Esophagus muscularis mucosa (tissue), 4 donors: ENCODE measurements at regions of chr16 and their contacts with region 1.

Region 1: GRCh38 chr16:87778830-87779579 is 13.2 kb upstream of the KLHDC4 start:
- DNase-seq: peak; percentile 98
- H3K4me3 ChIP-seq: peak overlapping the region in 1 of 4 donors; percentile 2
- H3K27ac ChIP-seq: no peak overlapping the region
- H3K4me1 ChIP-seq: peaks cover 14 to 28% (median 22%) of the 10 kb centered on the region in 4 donors
- H3K27me3 ChIP-seq: peaks cover 0 to 14% (median 0%) of the 10 kb centered on the region in 4 donors
- CTCF ChIP-seq: peak; percentile 98 to 99 (median 98)
- EP300 ChIP-seq: no peak
- POLR2A ChIP-seq: no peak

Region 2: DNA sequence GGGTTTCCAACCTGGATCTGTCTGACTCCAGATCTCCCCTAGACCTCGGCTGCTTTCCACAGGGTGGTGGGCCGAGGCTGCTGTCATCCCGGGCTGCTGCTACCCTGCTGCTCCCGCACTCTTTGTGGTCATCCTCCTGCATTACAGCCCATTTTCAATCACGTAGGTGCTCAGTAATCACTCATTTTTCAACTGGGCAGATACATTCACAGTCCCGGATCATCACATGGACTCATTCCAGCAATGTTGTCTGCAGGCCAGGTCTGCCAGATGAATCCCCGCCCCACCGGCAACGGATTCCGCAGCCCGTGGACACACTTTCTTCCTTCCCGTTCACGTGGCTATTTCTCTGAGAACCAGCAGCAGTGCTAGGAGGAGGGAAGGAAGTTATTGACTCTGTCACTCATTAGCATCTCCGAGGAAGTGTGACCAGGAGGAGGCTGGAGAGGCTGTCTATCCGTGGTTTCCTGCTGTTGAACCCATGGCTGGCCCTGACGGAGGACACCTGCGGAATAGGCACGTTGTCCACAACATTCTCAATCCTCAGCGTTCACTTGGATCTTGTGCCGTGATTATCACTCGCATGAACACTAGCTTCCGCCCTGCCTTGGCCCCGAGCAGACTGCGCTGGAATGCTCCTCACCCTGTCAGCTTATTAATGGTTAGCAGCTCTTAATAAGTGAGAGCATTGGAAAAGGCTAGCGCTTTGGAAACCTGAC is 271.5 kb before region 1 on chr16:
- intact Hi-C with region 1: no loop called
- DNase-seq: no peak
- H3K4me3 ChIP-seq: peak overlapping the region; percentile 13 to 38 (median 25)
- H3K27ac ChIP-seq: peak overlapping the region in 3 of 4 donors; percentile 5 to 57 (median 35)
- H3K4me1 ChIP-seq: peaks cover 0 to 20% (median 16%) of the 10 kb centered on the region in 4 donors
- H3K27me3 ChIP-seq: peaks cover 0 to 15% (median 0%) of the 10 kb centered on the region in 4 donors
- CTCF ChIP-seq: no peak
- EP300 ChIP-seq: no peak
- POLR2A ChIP-seq: no peak

Region 3: DNA sequence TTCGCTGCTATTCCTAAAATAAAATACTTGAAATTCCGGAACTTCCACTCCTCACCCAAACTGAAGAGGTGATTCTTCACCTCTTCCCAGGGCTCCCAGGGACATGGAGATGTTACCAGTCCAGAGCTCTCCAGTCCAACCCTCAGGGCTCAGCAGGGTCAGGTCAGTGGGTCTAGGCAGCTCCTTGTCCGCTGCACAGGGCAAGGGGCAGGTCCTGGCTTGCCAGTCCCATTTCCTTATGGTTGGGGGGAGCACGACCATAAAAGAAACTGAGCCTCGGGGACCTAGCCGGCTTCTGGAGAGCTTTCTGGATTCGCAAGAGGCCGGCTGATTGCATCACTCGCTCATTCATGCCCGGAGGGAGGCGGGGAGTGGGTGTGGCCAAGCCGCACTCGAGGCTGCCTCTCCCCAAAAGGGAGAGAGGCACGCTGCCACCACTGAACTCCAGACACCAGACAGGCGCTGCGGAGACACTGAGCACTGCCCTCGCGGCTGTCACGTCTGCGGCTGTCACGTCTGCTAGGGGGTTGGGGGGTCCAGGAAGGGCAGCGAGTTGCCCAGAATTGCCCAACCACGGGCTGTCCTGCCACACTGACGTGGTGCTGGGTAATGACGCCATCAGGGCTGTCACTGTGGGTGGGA is 74.5 kb after region 1 on chr16:
- intact Hi-C with region 1: loop called (anchors 5 kb)
- DNase-seq: peak; percentile 98
- H3K4me3 ChIP-seq: peak overlapping the region; percentile 42 to 59 (median 42)
- H3K27ac ChIP-seq: peak overlapping the region; percentile 78 to 84 (median 82)
- H3K4me1 ChIP-seq: peaks cover 38 to 77% (median 72%) of the 10 kb centered on the region in 4 donors
- H3K27me3 ChIP-seq: no peaks in the 10 kb centered on the region
- CTCF ChIP-seq: no peak
- EP300 ChIP-seq: peak; percentile 72
- POLR2A ChIP-seq: no peak

Region 4: DNA sequence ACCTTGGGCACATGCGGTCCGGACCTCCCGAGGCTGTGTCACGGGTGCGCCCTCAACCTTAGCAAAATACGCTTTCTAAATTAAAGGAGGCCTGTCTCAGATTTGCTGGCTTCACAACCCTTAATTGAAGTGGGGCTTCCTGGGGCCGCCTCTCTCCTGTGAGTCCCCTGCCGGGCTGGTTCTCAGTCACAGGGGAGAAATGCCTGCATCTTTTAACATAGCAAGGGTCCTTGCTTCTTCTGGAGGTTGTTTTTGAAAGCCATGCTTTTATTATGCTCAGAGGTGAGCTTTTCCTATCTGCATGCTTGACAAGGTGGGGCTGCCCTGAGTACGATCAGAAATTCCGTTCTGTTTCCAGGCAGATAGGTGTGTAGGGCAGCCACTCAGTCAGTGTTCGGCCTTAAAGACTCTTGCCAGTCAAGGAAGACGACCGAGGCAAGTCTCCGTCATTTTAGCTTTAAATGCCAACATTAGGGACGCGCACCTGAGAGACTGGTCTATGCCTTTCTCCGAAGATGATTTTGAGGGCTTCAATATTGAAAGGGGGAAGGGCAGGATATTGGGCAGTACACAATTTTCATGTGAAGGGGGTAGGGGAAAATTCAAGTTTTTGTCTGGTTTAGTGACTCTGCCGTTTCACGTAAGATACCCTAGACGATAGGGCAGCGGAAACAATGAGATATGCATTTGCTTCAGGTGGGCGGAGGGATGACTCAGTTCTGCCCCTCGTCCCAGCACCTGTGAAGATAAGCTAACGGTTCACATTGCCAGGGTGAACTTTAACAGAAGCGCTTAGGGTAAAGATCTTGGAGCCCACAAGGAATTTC is 95.8 kb after region 1 on chr16:
- intact Hi-C with region 1: loop called (anchors 1 kb)
- DNase-seq: no peak
- H3K4me3 ChIP-seq: no peak overlapping the region
- H3K27ac ChIP-seq: no peak overlapping the region
- H3K4me1 ChIP-seq: peaks cover 0 to 8% (median 5%) of the 10 kb centered on the region in 4 donors
- H3K27me3 ChIP-seq: peaks cover 0 to 59% (median 0%) of the 10 kb centered on the region in 4 donors
- CTCF ChIP-seq: no peak
- EP300 ChIP-seq: no peak
- POLR2A ChIP-seq: no peak

Region 5: DNA sequence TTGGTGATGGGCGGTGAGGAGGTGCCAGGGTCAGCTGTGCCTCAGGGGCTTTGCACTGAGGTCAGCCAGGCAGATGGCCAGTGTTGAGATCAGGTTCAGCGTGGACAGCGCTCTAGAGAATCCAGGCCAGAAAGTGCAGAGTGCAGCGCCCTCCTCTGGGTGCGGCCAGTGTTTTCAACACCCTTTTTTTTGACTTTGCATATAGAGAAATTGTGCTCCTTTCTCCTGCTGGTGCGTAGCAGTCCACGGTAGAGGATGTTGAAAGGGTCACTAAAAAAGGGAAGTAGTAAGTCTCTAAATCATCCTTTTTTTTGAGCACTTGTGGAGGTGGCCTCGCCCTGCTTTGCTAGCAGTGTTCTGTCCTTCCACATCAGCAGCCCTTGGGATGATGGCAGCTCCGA is 226.2 kb after region 1 on chr16:
- intact Hi-C with region 1: no loop called
- DNase-seq: no peak
- H3K4me3 ChIP-seq: no peak overlapping the region
- H3K27ac ChIP-seq: no peak overlapping the region
- H3K4me1 ChIP-seq: peaks cover 0 to 4% (median 0%) of the 10 kb centered on the region in 4 donors
- H3K27me3 ChIP-seq: no peaks in the 10 kb centered on the region
- CTCF ChIP-seq: no peak
- EP300 ChIP-seq: no peak
- POLR2A ChIP-seq: no peak